Left cardiac atrium (tissue), 4 donors: ENCODE measurements at regions of chr11 and their contacts with region 1.

Region 1: GRCh38 chr11:65575568-65576231 is at the start of gene EHBP1L1:
- DNase-seq: peak; percentile 80
- ATAC-seq: peak; percentile 15 to 39
- total RNA-seq, gene EHBP1L1: 53.4 to 61.0 TPM

Region 2: GRCh38 chr11:65615229-65615941 is 39.7 kb after region 1 on chr11 and contains the start of gene PCNX3:
- intact Hi-C with region 1: loop called in 1 of 2 experiments (anchors 5 kb)
- DNase-seq: peak; percentile 100
- ATAC-seq: peak; percentile 87
- total RNA-seq, gene PCNX3: 15.1 to 16.7 TPM